T-cell (primary cell): ENCODE measurements at regions of chr4 and their contacts with region 1.

Region 1: GRCh38 chr4:108417923-108418322 is 202.5 kb upstream of the RPL34 start:
- DNase-seq: no peak
- ATAC-seq: no peak
- H3K4me3 ChIP-seq: no peak overlapping the region
- H3K4me3 Mint-ChIP-seq: no peak overlapping the region
- H3K27ac ChIP-seq: no peak overlapping the region
- H3K27ac Mint-ChIP-seq: no peak overlapping the region
- H3K4me1 ChIP-seq: no peaks in the 10 kb centered on the region
- H3K4me1 Mint-ChIP-seq: peaks cover 10 to 17% (median 17%) of the 10 kb centered on the region in 3 donors
- H3K27me3 ChIP-seq: no peaks in the 10 kb centered on the region
- H3K27me3 Mint-ChIP-seq: no peaks in the 10 kb centered on the region

Region 2: GRCh38 chr4:108333353-108333942 is 84.5 kb before region 1 on chr4:
- CTCF ChIA-PET with region 1: no interaction called
- POLR2A ChIA-PET with region 1: interaction called in 1 of 2 experiments, 12 read pairs
- DNase-seq: no peak
- ATAC-seq: no peak
- H3K4me3 ChIP-seq: no peak overlapping the region
- H3K4me3 Mint-ChIP-seq: no peak overlapping the region
- H3K27ac ChIP-seq: no peak overlapping the region
- H3K27ac Mint-ChIP-seq: no peak overlapping the region
- H3K4me1 ChIP-seq: no peaks in the 10 kb centered on the region
- H3K4me1 Mint-ChIP-seq: peaks cover 10 to 13% (median 12%) of the 10 kb centered on the region in 3 donors
- H3K27me3 ChIP-seq: no peaks in the 10 kb centered on the region
- H3K27me3 Mint-ChIP-seq: peaks cover 0 to 2% of the 10 kb centered on the region in 2 donors

Region 3: DNA sequence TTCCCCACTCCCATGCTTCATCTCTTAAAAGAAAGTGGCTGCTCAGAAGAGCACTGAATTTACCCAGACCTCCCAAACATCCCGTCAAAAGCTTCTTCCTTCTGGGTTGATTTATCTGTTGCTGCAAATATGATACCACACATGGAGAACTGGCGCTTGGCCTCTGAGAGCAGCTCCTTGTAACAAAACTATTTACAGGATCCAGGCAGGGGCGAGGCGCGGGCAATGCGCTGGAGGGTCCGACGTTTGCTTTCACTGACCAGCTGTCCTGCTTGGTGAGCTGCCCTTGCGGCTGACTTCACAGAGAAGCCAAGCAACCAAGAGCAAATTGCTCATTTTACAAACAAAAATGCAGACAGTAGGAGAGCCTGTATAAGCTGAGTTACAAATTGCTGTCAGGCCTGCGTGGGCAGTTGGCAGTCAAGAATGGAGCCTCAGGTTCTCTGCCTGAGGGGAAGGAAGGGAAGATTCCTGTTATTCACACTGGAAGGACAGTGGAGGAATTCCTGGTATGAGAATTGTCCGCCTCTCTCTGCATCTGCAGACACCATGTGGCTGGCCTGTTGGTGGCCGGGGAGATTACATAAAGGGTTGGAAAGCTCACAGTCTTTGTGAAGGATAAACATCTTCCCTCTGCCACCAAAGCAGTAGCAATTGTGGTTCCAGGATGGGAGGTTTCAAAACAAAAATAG is 57.0 kb before region 1 on chr4:
- CTCF ChIA-PET with region 1: no interaction called
- POLR2A ChIA-PET with region 1: no interaction called
- DNase-seq: no peak
- ATAC-seq: no peak
- H3K4me3 ChIP-seq: no peak overlapping the region
- H3K4me3 Mint-ChIP-seq: peak overlapping the region in 2 of 3 donors; percentile 2 to 68
- H3K27ac ChIP-seq: no peak overlapping the region
- H3K27ac Mint-ChIP-seq: peak overlapping the region; percentile 51 to 59
- H3K4me1 ChIP-seq: peaks cover 35 to 50% of the 10 kb centered on the region in 2 experiments
- H3K4me1 Mint-ChIP-seq: peaks cover 58 to 73% (median 63%) of the 10 kb centered on the region in 3 donors
- H3K27me3 ChIP-seq: peaks cover 0 to 3% of the 10 kb centered on the region in 2 experiments
- H3K27me3 Mint-ChIP-seq: no peaks in the 10 kb centered on the region

Region 4: DNA sequence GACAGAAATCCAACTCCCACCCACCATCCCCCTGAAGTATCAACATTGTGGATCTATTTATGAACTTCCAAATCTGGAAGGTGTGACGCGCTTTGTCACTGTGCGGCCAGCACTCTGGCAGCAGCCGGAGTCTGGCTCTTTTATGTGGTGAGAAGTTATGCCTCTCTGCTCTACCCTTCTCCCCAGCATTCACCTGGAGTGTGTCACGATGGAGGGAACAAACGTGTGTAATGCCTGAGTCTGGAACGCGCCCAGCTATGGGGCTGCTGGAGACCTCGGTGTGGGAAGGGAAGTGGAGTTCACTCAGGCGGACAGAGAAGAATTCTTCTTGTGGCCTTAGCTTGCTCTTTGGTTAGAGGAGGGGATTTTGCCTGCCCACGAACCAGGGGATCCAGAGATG is 19.6 kb before region 1 on chr4:
- CTCF ChIA-PET with region 1: no interaction called
- POLR2A ChIA-PET with region 1: no interaction called
- DNase-seq: peak in 1 of 35 experiments; percentile 2
- ATAC-seq: peak in 3 of 4 experiments; percentile 19 to 77 (median 30)
- H3K4me3 ChIP-seq: peak overlapping the region in 1 of 2 donors; percentile 41
- H3K4me3 Mint-ChIP-seq: no peak overlapping the region
- H3K27ac ChIP-seq: no peak overlapping the region
- H3K27ac Mint-ChIP-seq: no peak overlapping the region
- H3K4me1 ChIP-seq: peaks cover 8 to 12% of the 10 kb centered on the region in 2 experiments
- H3K4me1 Mint-ChIP-seq: peaks cover 4 to 15% (median 7%) of the 10 kb centered on the region in 3 donors
- H3K27me3 ChIP-seq: no peaks in the 10 kb centered on the region
- H3K27me3 Mint-ChIP-seq: no peaks in the 10 kb centered on the region

Region 5: GRCh38 chr4:108762559-108763225 is 344.8 kb after region 1 on chr4 and contains the start of gene ETNPPL:
- CTCF ChIA-PET with region 1: no interaction called
- POLR2A ChIA-PET with region 1: no interaction called
- DNase-seq: peak in 28 of 35 experiments; percentile 1 to 33 (median 13)
- ATAC-seq: peak; percentile 48 to 86 (median 82)
- H3K4me3 ChIP-seq: peak within 1 kb of the TSS; percentile 50 to 89
- H3K4me3 Mint-ChIP-seq: peak within 1 kb of the TSS; percentile 73 to 93 (median 77)
- H3K27ac ChIP-seq: no peak within 1 kb of the TSS
- H3K27ac Mint-ChIP-seq: peak within 1 kb of the TSS in 1 of 2 donors; percentile 36
- H3K4me1 ChIP-seq: peaks cover 3 to 15% of the 10 kb centered on the region in 2 experiments
- H3K4me1 Mint-ChIP-seq: peaks cover 12 to 21% (median 13%) of the 10 kb centered on the region in 3 donors
- H3K27me3 ChIP-seq: peaks cover 0 to 25% of the 10 kb centered on the region in 2 experiments
- H3K27me3 Mint-ChIP-seq: peaks cover 42 to 51% of the 10 kb centered on the region in 2 donors
- total RNA-seq, gene ETNPPL: 0.13 TPM in 1 of 5 donors, not detected in the others